Lower leg skin (tissue), 4 donors: ENCODE measurements at regions of chr1 and their contacts with region 1.

Region 1: DNA sequence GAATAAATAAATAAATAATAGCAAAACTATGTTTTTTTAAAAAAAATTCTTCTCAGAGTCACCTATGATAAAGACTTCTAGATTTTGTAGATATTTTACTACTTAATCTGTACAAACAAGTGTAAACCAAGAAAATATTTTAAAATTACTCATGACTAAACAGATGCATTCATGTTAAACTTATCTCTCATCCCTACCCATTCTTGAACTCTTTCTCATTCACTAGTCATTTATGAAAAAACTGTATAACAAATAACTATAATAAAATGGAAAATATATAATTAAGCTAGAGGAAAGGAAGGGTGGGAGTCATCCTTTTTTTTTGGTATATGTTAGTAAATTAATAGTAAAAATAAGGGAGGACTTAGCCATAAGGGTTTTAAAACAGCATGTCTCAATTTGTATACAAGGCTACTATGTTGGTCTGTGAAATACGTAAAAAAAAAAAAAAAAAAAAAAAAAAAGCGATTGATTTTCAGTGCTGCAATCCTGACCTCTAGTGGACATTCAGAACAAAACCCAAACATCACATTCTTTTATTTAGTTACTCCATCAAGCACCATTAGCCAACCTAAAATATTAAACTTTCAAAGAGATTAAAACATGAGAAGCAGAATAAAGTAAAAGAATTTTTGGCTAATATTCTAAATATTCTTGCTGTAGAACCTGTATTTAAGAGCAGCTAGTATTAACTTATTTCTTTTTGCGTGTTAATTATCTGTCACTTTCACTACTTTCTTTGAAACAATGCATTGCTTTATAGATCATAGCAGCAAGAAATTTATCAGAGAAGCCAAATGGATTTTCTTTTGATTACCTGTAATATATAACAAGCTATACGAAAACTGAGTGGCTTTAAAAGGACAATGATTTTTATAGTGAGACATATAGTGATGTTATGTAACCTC is 255.8 kb upstream of the CACYBP start:
- DNase-seq: no peak
- H3K4me3 ChIP-seq: no peak overlapping the region
- CTCF ChIP-seq: no peak
- POLR2A ChIP-seq: no peak

Region 2: GRCh38 chr1:174262349-174263241 is 481.3 kb before region 1 on chr1:
- intact Hi-C with region 1: loop called (anchors 5 kb)
- DNase-seq: no peak
- H3K4me3 ChIP-seq: no peak overlapping the region
- CTCF ChIP-seq: no peak
- POLR2A ChIP-seq: no peak

Region 3: DNA sequence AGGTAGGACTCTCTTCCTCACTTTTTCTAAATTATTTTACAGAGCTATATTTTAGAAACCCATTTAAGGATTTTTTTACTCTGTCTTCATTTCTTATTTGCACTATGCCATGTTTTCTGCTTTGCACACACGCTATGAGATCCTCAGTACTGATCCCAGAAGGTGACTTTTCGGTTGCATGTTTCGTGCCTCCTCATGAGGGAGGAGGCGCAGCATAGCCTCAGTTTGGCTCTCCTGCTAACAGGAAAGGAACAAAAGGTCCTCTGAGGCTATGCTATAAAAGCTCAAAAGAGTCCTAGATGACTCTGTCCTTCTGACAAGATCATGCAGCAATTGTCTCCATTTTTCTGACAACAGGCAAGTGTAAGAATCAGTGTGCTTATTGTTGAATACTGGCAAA is 106.4 kb before region 1 on chr1:
- intact Hi-C with region 1: no loop called
- DNase-seq: no peak
- H3K4me3 ChIP-seq: no peak overlapping the region
- CTCF ChIP-seq: no peak
- POLR2A ChIP-seq: no peak

Region 4: DNA sequence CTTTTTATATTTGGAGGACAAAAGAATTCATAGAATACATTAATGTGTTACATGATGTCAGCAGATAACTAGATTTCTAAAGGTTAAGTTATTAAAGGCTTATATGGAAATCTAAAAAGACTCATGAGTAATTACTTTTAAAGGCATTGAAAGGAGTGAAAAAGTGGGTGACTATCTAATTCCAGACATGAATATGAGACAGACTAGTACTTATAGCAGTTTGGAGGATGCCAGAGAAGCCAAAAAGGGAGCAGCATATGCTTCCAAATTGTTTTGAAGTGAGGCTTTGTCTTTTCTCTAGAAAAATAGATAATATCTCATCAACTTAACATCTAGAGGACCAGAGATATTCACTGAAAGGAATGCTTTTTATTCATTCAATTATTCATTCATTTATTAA is 19.7 kb before region 1 on chr1:
- intact Hi-C with region 1: no loop called
- DNase-seq: no peak
- H3K4me3 ChIP-seq: no peak overlapping the region
- CTCF ChIP-seq: no peak
- POLR2A ChIP-seq: no peak